ENCODE measurements at regions of chr19 and their contacts with region 1.

Region 1: GRCh38 chr19:41144403-41144802 is 30.2 kb downstream of the CYP2F1 start:
- DNase-seq: peak; percentile 90
- H3K4me3 Mint-ChIP-seq: no peak overlapping the region
- H3K27ac Mint-ChIP-seq: no peak overlapping the region
- H3K4me1 Mint-ChIP-seq: no peaks in the 10 kb centered on the region
- H3K27me3 Mint-ChIP-seq: peaks cover 17% of the 10 kb centered on the region

Region 2: DNA sequence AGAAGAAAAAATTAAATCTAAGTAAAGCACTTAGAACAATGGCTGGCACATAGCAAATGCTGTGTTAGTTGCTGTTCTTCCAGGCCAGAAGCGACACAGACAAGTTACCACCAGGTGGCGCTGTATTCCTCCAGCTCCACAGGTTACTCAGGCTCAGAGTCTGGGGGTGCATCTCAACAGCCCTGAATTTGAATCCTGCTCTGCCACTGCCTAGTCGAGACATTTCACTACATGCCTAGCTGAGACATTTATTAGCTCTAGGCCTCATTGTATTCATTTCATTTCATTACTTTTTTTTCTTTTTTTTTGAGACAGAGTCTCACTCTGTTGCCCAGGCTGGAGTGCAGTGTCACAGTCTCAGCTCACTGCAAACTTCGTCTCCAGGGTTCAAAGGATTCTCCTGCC is 169.8 kb before region 1 on chr19:
- CTCF ChIA-PET with region 1: interaction called, 27 read pairs
- POLR2A ChIA-PET with region 1: no interaction called
- DNase-seq: peak; percentile 82
- H3K4me3 Mint-ChIP-seq: no peak overlapping the region
- H3K27ac Mint-ChIP-seq: no peak overlapping the region
- H3K4me1 Mint-ChIP-seq: peaks cover 48% of the 10 kb centered on the region
- H3K27me3 Mint-ChIP-seq: peaks cover 2% of the 10 kb centered on the region

Region 3: DNA sequence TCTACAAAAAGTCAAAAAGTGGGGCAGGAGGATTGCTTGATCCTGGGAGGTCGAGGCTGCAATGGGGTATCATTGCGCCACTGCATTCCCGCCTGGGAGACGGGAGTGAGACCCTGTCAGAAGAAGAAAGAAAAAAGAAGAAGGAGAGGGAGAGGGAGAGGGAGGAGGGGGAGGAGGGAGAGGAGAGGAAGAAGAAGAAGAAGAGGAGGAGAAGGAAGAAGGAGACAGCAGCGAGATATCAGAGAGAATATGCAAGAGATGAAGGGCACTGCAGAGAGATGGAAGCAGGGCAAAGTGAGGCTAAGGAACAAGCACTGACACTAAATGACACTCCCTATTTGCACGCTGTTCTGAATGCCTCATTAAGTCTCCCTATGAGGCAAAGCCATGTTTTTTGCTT is 15.7 kb before region 1 on chr19:
- CTCF ChIA-PET with region 1: interaction called, 22 read pairs
- POLR2A ChIA-PET with region 1: interaction called, 3 read pairs
- DNase-seq: no peak
- H3K4me3 Mint-ChIP-seq: no peak overlapping the region
- H3K27ac Mint-ChIP-seq: no peak overlapping the region
- H3K4me1 Mint-ChIP-seq: peaks cover 18% of the 10 kb centered on the region
- H3K27me3 Mint-ChIP-seq: peaks cover 18% of the 10 kb centered on the region

Measured in activated CD4-positive, alpha-beta memory T cell treated with anti-CD3 and anti-CD28 coated beads, Interleukin-2, amount 10 ng/mL, durations not matched to agents 7 days and 5 days (primary cell).